ENCODE measurements at regions of chr10 and their contacts with region 1.

Region 1: DNA sequence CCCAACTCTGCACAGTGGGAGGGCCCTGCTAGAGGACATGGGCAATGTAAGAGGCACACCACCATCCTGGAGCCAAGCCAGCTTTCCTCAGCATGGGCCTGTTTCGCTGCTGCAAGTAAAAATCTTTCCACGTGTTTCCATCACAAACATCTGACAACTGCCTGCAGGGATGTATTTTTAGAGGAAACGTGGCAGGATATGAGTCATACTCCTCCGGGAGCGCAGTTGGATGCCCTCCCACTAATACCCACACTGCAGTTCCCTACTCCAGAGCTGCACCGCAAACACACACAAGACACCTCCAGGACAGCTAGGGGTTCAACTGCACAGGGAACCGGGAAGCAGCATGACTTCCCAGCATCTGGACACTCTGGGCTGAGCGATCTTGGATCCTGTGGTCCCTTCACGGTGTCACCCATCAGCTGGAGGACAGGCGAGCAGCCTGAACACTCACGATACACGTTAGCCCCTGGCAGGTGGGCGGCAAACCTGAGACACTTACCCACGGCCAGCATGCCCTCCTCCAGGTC is 26.1 kb downstream of the PLAC9 start:
- DNase-seq: peak; percentile 99
- ATAC-seq: peak; percentile 65
- H3K4me3 ChIP-seq: no peak overlapping the region
- H3K27ac ChIP-seq: peak overlapping the region; percentile 94
- H3K4me1 ChIP-seq: peaks cover 46% of the 10 kb centered on the region
- H3K27me3 ChIP-seq: no peaks in the 10 kb centered on the region
- CTCF ChIP-seq: no peak
- POLR2A ChIP-seq: 0 out of 2 replicates have a peak, but pooled peaks have one; percentile 54
- RAD21 ChIP-seq: no peak

Region 2: DNA sequence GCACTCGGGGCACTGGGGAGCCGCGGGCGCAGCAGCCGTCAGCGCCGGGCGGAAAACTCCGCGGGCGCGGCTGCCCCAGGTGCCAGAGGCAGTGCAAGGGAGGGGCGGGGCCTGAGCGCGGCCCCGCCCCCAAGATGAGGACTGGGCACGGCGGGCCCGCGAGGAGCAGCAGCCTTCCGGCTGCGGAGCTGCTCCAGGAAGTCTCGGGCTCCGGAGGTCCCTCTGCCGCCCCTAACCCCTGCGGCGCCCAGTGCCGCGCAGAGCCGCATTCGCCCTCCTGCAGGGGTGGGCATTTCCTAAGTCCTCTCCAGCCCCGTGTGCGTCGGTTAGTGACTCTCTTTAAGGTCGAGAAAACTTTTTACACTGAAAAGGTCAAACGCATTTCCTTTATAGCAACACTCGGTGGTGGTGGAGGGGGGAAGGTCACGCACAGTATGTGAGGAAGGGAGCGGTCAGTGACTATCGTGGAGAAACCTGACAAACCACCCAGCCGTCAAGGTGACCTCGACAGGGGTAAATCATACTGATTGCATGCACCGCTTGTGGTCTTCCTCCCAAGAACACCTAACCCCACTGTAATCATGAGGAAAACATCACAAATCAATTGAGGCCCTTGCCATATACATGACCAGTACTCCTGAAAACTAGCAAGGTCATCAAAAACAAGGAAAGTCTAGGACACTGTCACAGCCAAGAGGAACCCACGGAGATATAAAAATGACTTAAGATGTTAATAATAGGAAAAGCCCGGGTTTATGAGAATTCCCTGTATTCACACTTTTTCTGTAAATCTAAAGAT is 47.0 kb after region 1 on chr10 and contains the start of gene ANXA11:
- CTCF ChIA-PET with region 1: interaction called, 4 read pairs
- POLR2A ChIA-PET with region 1: no interaction called
- dilution Hi-C with region 1: no loop called
- in situ Hi-C with region 1: loop called (anchors 10 kb)
- intact Hi-C with region 1: loop called (anchors 1 kb)
- DNase-seq: peak; percentile 54
- ATAC-seq: peak; percentile 78
- H3K4me3 ChIP-seq: peak within 1 kb of the TSS; percentile 61
- H3K27ac ChIP-seq: peak within 1 kb of the TSS; percentile 98
- H3K4me1 ChIP-seq: peaks cover 18% of the 10 kb centered on the region
- H3K27me3 ChIP-seq: no peaks in the 10 kb centered on the region
- CTCF ChIP-seq: no peak
- POLR2A ChIP-seq: peak; percentile 81
- RAD21 ChIP-seq: no peak
- total RNA-seq, gene ANXA11: 39.4 and 40.8 TPM in 2 replicates

Region 3: DNA sequence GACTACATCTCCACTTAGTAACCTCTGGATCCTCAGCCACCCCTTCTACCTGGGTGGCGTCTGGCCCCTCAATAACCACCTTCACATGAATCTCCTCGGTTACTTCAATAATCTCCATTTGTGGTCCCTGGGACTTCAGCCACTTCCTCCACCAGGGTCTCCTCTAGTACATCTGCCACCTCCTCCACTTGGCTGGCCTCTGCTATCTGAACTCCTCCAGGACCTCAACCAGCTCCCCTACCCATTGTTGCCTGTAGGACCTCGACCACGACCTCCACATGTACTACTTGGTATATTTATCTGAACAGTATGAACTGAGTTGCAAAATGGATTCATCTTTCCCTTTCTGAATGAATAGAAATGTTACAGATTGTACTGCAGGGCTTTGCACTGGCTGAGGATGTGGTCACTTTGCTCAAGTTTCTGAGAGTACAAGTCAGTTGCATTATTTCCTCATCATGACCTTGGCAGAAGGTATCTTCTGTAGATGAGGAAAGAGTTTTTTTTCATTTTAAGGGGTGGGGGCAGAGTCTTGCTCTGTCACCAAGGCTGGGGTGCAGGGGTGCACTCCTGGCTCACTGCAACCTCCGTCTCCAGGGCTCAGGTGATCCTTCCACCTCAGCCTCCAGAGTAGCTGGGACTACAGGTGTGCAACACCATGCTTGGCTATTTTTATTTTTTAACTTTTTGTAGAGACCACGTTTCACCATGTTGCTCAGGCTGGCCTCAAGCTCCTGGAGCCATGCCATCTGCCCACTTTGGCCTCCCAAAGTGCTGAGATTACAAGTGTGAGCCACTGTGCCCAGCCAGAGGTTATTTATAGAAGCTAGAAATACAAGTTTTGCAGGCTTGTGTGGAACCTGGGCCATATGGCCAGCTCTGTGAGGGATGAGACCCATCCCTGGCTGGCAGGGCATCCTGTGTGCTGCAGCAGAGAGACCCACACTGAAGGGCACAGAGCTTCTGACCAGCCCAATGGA is 94.9 kb after region 1 on chr10:
- CTCF ChIA-PET with region 1: no interaction called
- POLR2A ChIA-PET with region 1: no interaction called
- dilution Hi-C with region 1: no loop called
- in situ Hi-C with region 1: no loop called
- intact Hi-C with region 1: no loop called
- DNase-seq: no peak
- ATAC-seq: no peak
- H3K4me3 ChIP-seq: no peak overlapping the region
- H3K27ac ChIP-seq: no peak overlapping the region
- H3K4me1 ChIP-seq: no peaks in the 10 kb centered on the region
- H3K27me3 ChIP-seq: peaks cover 3% of the 10 kb centered on the region; the same call in 1 of the 2 replicates
- CTCF ChIP-seq: no peak
- POLR2A ChIP-seq: no peak
- RAD21 ChIP-seq: no peak

Region 4: GRCh38 chr10:80453701-80454513 is 295.2 kb after region 1 on chr10 and contains the start of gene TSPAN14:
- CTCF ChIA-PET with region 1: no interaction called
- POLR2A ChIA-PET with region 1: no interaction called
- dilution Hi-C with region 1: no loop called
- in situ Hi-C with region 1: loop called (anchors 25 kb)
- intact Hi-C with region 1: no loop called
- DNase-seq: peak; percentile 79
- ATAC-seq: peak; percentile 89
- H3K4me3 ChIP-seq: peak within 1 kb of the TSS; percentile 73
- H3K27ac ChIP-seq: peak within 1 kb of the TSS; percentile 83
- H3K4me1 ChIP-seq: peaks cover 13% of the 10 kb centered on the region
- H3K27me3 ChIP-seq: no peaks in the 10 kb centered on the region
- CTCF ChIP-seq: no peak
- POLR2A ChIP-seq: no peak; the same call in 1 of the 2 replicates
- RAD21 ChIP-seq: 0 out of 2 replicates have a peak, but pooled peaks have one; percentile 4
- total RNA-seq, gene TSPAN14: 13.3 and 18.5 TPM in 2 replicates

Measured in IMR-90 (cell line).